CD8-positive, alpha-beta memory T cell (primary cell): ENCODE measurements at regions of chr15 and their contacts with region 1.

Region 1: DNA sequence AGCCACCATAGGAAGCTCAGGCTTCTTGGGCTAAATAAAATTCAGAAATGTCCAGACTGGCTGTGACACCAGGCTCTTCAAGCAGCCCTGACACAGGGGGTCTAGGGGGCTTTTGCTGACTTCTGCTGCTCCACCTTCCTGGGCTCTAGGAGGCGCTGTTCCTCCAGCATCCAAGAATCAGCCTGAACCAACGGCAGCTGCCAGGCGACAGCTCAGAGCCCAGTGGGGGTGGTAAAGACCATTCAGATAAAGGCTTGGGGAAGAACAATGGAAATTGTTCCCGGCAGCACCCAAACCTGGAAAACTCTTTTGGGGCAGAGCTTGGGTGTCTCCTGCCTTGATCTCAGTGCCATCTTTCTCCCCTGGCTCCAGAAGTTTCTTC is 21.6 kb upstream of the PSTPIP1 start:
- DNase-seq: peak; percentile 40 to 83 (median 58)
- H3K4me3 ChIP-seq: no peak overlapping the region
- H3K4me3 Mint-ChIP-seq: no peak overlapping the region
- H3K27ac ChIP-seq: no peak overlapping the region
- H3K27ac Mint-ChIP-seq: peak overlapping the region in 3 of 8 donors; percentile 10 to 61 (median 37)
- H3K4me1 ChIP-seq: peaks cover 4% of the 10 kb centered on the region
- H3K4me1 Mint-ChIP-seq: peaks cover 11 to 22% (median 16%) of the 10 kb centered on the region in 3 donors
- H3K27me3 ChIP-seq: no peaks in the 10 kb centered on the region
- H3K27me3 Mint-ChIP-seq: peaks cover 0 to 3% of the 10 kb centered on the region in 2 donors

Region 2: DNA sequence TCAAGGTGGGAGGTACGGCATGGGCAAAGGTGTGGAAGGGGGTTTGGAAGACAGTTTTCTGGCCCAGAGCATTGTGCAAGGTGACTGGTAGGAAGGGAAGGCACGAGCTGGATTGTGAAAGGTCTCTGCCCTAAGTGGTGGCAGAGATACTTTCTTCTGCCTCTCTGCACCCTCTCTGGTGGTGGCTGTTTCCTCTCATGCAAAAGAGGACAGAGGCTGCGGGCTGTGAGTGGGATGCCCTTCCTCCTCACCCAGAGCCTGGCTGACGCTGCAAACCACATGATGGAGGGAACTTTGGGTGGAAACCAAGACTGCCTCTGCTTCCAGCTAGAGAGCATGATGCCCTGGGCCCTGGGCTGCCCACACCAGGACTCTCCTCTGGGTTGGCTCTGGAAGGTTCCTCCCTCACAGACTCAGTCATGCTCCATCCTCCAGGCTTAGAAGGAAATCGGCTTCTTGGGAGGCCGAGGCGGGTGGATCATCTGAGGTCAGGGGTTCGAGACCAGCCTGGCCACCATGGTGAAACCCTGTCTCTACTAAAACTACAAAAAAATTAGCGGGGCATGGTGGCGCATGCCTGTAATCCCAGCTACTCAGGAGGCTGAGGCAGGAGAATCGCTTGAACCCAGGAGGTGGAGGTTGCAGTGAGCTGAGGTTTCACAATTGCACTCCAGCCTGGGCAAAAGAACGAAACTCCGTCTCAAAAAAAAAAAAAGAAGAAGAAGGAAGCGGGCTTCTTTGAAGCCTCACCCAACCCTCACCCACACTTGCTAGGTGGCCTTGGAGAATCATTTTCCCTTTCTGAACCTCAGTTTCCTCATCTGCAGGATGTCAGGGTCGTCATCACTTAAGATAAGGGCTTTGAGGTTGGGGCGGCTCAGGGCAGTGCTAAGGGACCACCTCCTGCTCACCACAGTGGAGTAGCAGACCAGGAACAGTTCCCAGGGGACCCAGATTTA is 29.9 kb after region 1 on chr15:
- CTCF ChIA-PET with region 1: interaction called, 15 read pairs
- POLR2A ChIA-PET with region 1: no interaction called
- DNase-seq: peak; percentile 51 to 85 (median 69)
- H3K4me3 ChIP-seq: peak overlapping the region; percentile 47
- H3K4me3 Mint-ChIP-seq: peak overlapping the region; percentile 71 to 91 (median 86)
- H3K27ac ChIP-seq: peak overlapping the region; percentile 48
- H3K27ac Mint-ChIP-seq: peak overlapping the region; percentile 92 to 99 (median 94)
- H3K4me1 ChIP-seq: peaks cover 94% of the 10 kb centered on the region
- H3K4me1 Mint-ChIP-seq: peaks cover 84 to 97% (median 95%) of the 10 kb centered on the region in 3 donors
- H3K27me3 ChIP-seq: no peaks in the 10 kb centered on the region
- H3K27me3 Mint-ChIP-seq: no peaks in the 10 kb centered on the region

Region 3: GRCh38 chr15:77024271-77025082 is 51.1 kb after region 1 on chr15:
- CTCF ChIA-PET with region 1: interaction called, 78 read pairs
- POLR2A ChIA-PET with region 1: no interaction called
- DNase-seq: peak; percentile 54 to 76 (median 62)
- H3K4me3 ChIP-seq: no peak overlapping the region
- H3K4me3 Mint-ChIP-seq: peak overlapping the region in 3 of 7 donors; percentile 20 to 55 (median 41)
- H3K27ac ChIP-seq: peak overlapping the region; percentile 54
- H3K27ac Mint-ChIP-seq: peak overlapping the region; percentile 87 to 100 (median 98)
- H3K4me1 ChIP-seq: peaks cover 48% of the 10 kb centered on the region
- H3K4me1 Mint-ChIP-seq: peaks cover 49 to 70% (median 54%) of the 10 kb centered on the region in 3 donors
- H3K27me3 ChIP-seq: no peaks in the 10 kb centered on the region
- H3K27me3 Mint-ChIP-seq: peaks cover 0 to 2% of the 10 kb centered on the region in 2 donors

Region 4: DNA sequence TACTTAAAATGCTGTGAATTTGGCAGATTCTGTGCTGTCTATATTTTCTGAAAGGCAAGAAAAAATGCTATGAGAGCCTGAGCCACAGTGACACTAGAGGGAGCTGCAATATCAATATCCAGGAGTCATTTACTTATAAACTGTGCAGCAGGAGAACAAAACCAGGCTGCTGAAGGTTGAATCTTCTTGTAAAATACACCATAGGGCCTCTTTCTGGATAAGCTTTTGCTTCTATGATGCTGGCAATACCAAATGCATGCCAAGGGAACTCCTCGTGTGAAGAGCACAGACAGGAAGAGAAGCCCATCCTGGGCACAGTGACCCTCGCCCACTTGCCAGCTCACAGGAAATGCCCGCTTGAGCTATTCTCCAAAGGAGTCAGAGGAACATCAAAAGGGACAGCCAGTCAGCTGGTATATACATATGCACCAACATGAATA is 145.5 kb after region 1 on chr15:
- CTCF ChIA-PET with region 1: interaction called, 12 read pairs
- POLR2A ChIA-PET with region 1: no interaction called
- DNase-seq: peak in 4 of 5 donors; percentile 17 to 56 (median 45)
- H3K4me3 ChIP-seq: no peak overlapping the region
- H3K4me3 Mint-ChIP-seq: peak overlapping the region in 2 of 7 donors; percentile 8
- H3K27ac ChIP-seq: no peak overlapping the region
- H3K27ac Mint-ChIP-seq: peak overlapping the region in 4 of 8 donors; percentile 1 to 70 (median 37)
- H3K4me1 ChIP-seq: peaks cover 9% of the 10 kb centered on the region
- H3K4me1 Mint-ChIP-seq: peaks cover 8 to 26% (median 18%) of the 10 kb centered on the region in 3 donors
- H3K27me3 ChIP-seq: no peaks in the 10 kb centered on the region
- H3K27me3 Mint-ChIP-seq: no peaks in the 10 kb centered on the region

Region 5: DNA sequence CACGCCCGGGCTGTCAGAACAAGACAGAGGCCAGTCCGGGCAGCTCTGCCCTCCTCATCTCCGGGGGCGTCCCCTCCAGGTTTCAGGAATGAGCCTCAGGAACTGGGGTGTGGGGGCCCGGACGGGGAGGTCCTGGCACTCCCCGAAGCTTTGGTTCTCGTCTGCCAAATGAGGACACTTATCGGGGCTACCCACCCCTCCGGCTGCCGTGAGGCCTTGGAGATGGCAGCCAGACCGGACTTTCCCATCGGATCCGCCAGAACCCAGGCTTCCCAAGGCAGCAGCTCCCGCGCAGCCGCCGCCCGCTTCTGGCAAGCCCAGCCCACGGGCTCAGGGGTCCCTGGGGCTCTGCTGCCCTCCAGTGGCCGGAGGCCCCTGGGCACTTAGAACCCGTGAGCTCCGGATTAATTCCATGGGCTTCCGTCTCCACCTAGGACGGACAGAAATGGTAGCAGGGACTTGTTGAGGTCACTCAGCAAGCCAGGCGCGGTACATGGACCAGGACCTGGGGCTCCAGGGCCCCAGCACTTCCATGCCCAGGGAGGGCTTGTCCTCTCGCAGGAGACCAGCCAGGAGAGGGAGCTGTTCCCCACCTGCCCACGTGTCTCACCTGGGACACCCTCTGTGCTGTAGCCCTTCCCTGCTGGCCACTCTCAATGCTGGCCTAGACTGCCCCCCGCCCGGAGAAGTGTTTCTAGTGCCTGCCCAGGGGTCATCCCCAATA is 570.0 kb after region 1 on chr15:
- CTCF ChIA-PET with region 1: interaction called, 22 read pairs
- POLR2A ChIA-PET with region 1: no interaction called
- DNase-seq: peak; percentile 57 to 80 (median 63)
- H3K4me3 ChIP-seq: peak overlapping the region; percentile 77
- H3K4me3 Mint-ChIP-seq: peak overlapping the region; percentile 70 to 92 (median 79)
- H3K27ac ChIP-seq: peak overlapping the region; percentile 43
- H3K27ac Mint-ChIP-seq: peak overlapping the region in 4 of 8 donors; percentile 15 to 73 (median 42)
- H3K4me1 ChIP-seq: peaks cover 13% of the 10 kb centered on the region
- H3K4me1 Mint-ChIP-seq: peaks cover 0 to 18% (median 4%) of the 10 kb centered on the region in 3 donors
- H3K27me3 ChIP-seq: no peaks in the 10 kb centered on the region
- H3K27me3 Mint-ChIP-seq: peaks cover under 1 to 3% of the 10 kb centered on the region in 2 donors